HepG2 (cell line): ENCODE measurements at regions of chr2 and their contacts with region 1.

Region 1: DNA sequence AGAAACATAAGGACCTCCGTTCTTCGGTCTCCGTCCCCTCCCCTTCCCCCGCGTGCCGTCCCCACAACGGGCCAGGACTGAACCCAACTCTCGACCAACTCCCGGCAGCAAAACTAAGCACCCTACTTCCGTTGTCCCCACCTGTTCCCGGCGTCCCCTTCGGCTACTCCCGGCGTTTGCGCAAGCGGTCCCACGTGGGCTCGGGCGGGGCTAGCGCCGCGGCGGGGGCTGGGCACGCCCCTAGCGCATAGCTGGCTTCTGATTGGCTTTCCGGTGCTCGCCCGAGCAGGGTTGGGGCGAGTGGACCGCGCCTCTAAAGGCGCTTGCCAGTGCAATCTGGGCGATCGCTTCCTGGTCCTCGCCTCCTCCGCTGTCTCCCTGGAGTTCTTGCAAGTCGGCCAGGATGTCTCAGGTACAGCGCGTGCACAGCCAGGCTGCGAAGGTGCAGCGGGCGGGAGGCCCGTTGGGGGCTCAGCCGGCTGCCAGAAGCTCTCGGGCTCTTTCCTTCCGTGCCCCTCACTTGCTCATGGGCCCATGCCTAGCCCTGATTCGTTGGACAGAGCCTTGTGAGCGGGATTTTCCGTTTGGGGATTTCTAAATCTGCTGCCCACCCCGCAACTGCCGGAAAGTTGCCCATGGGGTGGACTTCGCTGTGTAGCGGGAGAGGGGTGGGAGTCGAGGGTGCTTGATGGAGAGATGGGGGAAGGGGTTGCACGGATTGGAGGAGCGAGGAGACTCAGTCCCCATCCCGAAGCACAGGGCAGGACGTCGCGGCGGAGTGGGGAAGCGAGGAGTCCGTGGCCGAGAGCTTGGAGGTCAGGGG is at the starts of genes C2orf76 and DBI:
- DNase-seq: peak; percentile 95
- ATAC-seq: peak; percentile 95
- H3K4me3 ChIP-seq: peak within 1 kb of the TSS; percentile 86 to 95 (median 88)
- H3K27ac ChIP-seq: peak within 1 kb of the TSS; percentile 84
- H3K4me1 ChIP-seq: peaks cover 42% of the 10 kb centered on the region
- H3K27me3 ChIP-seq: no peaks in the 10 kb centered on the region; a peak in 1 of 5 replicates
- CTCF ChIP-seq: 0 out of 2 replicates have a peak, but pooled peaks have one; percentile 7
- EP300 ChIP-seq: peak; percentile 78 to 90
- POLR2A ChIP-seq: peak; percentile 87 to 98
- RAD21 ChIP-seq: peak; percentile 18
- total RNA-seq, gene C2orf76: 8.5 TPM in 2 replicates
- total RNA-seq, gene DBI: 659 and 853 TPM in 2 replicates

Region 2: GRCh38 chr2:119223521-119224390 is 143.1 kb before region 1 on chr2 and contains the start of gene STEAP3:
- CTCF ChIA-PET with region 1: no interaction called
- POLR2A ChIA-PET with region 1: no interaction called
- in situ Hi-C with region 1: no loop called
- intact Hi-C with region 1: loop called (anchors 2 kb)
- DNase-seq: peak; percentile 74
- ATAC-seq: peak; percentile 93
- H3K4me3 ChIP-seq: peak within 1 kb of the TSS; percentile 71 to 87 (median 78)
- H3K27ac ChIP-seq: no peak within 1 kb of the TSS
- H3K4me1 ChIP-seq: peaks cover 54% of the 10 kb centered on the region
- H3K27me3 ChIP-seq: 0 out of 5 replicates have a peak, but pooled peaks cover 0 to 4% of the 10 kb centered on the region in 2 experiments
- CTCF ChIP-seq: 0 out of 2 replicates have a peak, but pooled peaks have one; percentile 10
- EP300 ChIP-seq: peak in 1 of 2 experiments; percentile 8; a peak in 1 of 4 replicates
- POLR2A ChIP-seq: peak; percentile 79 to 83
- RAD21 ChIP-seq: peak; percentile 26
- total RNA-seq, gene STEAP3: 12.8 and 21.1 TPM in 2 replicates

Region 3: GRCh38 chr2:119290859-119291587 is 75.8 kb before region 1 on chr2:
- CTCF ChIA-PET with region 1: no interaction called
- POLR2A ChIA-PET with region 1: interaction called, 4 read pairs
- in situ Hi-C with region 1: no loop called
- intact Hi-C with region 1: loop called (anchors 5 kb)
- DNase-seq: peak; percentile 75
- ATAC-seq: peak; percentile 97
- H3K4me3 ChIP-seq: peak overlapping the region in 1 of 3 experiments; percentile 2; a peak in 1 of 6 replicates
- H3K27ac ChIP-seq: no peak overlapping the region
- H3K4me1 ChIP-seq: peaks cover 27% of the 10 kb centered on the region
- H3K27me3 ChIP-seq: no peaks in the 10 kb centered on the region; a peak in 2 of 5 replicates
- CTCF ChIP-seq: peak; percentile 99
- EP300 ChIP-seq: no peak
- POLR2A ChIP-seq: no peak
- RAD21 ChIP-seq: peak; percentile 84

Region 4: GRCh38 chr2:119352357-119352756 is 14.5 kb before region 1 on chr2:
- CTCF ChIA-PET with region 1: no interaction called
- POLR2A ChIA-PET with region 1: interaction called, 26 read pairs
- in situ Hi-C with region 1: no loop called
- intact Hi-C with region 1: no loop called
- DNase-seq: no peak
- ATAC-seq: no peak
- H3K4me3 ChIP-seq: no peak overlapping the region
- H3K27ac ChIP-seq: no peak overlapping the region
- H3K4me1 ChIP-seq: no peaks in the 10 kb centered on the region
- H3K27me3 ChIP-seq: no peaks in the 10 kb centered on the region
- CTCF ChIP-seq: no peak
- EP300 ChIP-seq: no peak
- POLR2A ChIP-seq: no peak
- RAD21 ChIP-seq: no peak

Region 5: GRCh38 chr2:119377294-119377999 is 10.6 kb after region 1 on chr2:
- CTCF ChIA-PET with region 1: no interaction called
- POLR2A ChIA-PET with region 1: interaction called, 11 read pairs
- in situ Hi-C with region 1: no loop called
- intact Hi-C with region 1: no loop called
- DNase-seq: no peak
- ATAC-seq: peak; percentile 43
- H3K4me3 ChIP-seq: no peak overlapping the region
- H3K27ac ChIP-seq: no peak overlapping the region
- H3K4me1 ChIP-seq: peaks cover 35% of the 10 kb centered on the region
- H3K27me3 ChIP-seq: no peaks in the 10 kb centered on the region
- CTCF ChIP-seq: no peak
- EP300 ChIP-seq: no peak
- POLR2A ChIP-seq: no peak
- RAD21 ChIP-seq: no peak

Region 6: DNA sequence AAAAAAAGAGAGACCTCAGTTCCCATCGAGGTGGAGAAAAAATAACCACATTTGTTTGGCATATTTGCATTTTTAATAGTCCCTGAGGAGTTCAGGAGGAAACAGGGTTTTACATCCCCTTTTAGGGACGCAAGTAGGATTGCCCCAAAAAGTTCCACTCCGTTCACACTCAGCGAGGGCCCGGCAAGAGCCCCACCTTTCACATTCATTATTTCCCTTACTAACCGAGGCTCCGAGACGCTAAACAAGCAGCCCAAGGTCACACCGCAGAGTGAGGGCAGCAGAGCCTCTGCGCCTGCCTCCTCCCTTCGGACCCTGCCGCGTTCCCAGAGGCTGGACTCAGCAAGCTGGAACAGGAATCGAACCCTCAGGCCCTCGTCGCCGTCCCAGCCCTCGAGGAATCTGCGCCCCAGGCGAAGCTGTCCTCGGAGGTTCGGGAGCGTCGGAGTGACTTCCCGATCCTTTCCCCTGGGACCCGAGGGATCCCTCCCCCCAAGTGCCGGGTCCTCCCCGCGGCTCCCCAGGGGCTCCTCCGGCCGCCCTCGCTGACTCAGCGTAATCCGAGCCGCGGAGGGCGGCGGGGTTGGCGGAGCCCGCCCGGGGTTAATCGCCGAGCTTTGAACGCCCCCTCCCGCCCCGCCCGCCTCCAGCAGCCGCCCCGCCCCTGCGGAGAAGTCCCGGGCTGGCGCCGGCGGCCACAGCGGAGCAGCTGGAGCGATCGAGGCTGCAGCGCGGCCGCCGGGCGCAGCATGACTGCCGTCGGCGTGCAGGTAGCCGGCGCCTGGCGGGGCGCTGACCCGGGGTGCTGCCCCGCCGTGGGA is 64.5 kb after region 1 on chr2 and contains the start of gene TMEM37:
- CTCF ChIA-PET with region 1: no interaction called
- POLR2A ChIA-PET with region 1: interaction called, 14 read pairs
- in situ Hi-C with region 1: no loop called
- intact Hi-C with region 1: loop called (anchors 5 kb)
- DNase-seq: peak; percentile 79
- ATAC-seq: peak; percentile 70
- H3K4me3 ChIP-seq: peak within 1 kb of the TSS; percentile 84 to 90 (median 86)
- H3K27ac ChIP-seq: peak within 1 kb of the TSS; percentile 88
- H3K4me1 ChIP-seq: peaks cover 88% of the 10 kb centered on the region
- H3K27me3 ChIP-seq: no peaks in the 10 kb centered on the region; a peak in 1 of 5 replicates
- CTCF ChIP-seq: 0 out of 2 replicates have a peak, but pooled peaks have one; percentile 2
- EP300 ChIP-seq: peak in 1 of 2 experiments; percentile 64; a peak in 2 of 4 replicates
- POLR2A ChIP-seq: peak in 1 of 2 experiments; percentile 79; a peak in 1 of 4 replicates
- RAD21 ChIP-seq: 0 out of 2 replicates have a peak, but pooled peaks have one; percentile 14
- total RNA-seq, gene TMEM37: 23.7 and 37.7 TPM in 2 replicates

Region 7: DNA sequence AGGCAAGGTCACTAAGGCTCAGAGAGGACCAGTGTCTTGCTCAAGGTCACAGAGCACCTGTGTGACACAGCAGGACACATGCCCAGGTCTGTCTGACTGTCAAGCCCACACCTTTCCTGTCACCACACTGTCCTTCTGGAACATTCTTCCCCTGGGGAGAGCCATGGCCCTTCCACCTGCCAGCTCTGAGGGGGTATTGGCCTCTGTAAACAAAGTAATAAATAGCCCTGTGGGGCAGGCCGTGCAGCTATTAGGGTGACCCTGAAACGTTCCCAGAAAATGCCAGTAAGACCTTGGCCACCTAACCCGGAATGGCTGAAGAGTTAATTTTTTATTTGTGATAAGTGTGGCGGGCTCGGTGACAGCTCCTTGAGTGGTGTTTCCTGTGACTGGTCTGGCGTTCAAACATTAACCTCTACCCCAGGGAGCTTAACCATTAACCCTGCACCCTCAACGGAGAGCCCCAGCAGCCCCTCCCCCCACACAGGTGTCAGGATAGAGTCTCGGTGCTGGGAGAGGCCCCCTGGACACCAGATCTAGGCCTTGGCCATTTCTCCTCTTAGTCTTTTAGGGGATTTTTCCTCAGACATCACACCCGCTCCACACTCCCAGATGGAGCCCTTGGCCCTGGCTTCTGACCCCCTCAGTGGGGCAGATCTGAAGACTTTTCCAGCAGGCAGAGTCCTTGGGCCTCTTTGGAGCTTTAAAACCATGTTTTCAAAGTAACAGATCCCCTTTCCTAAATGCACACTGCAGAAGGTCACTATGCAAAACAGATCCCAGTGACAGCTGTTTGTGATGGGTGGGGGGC is 120.8 kb after region 1 on chr2:
- CTCF ChIA-PET with region 1: no interaction called
- POLR2A ChIA-PET with region 1: interaction called, 11 read pairs
- in situ Hi-C with region 1: no loop called
- intact Hi-C with region 1: no loop called
- DNase-seq: peak; percentile 90
- ATAC-seq: peak; percentile 90
- H3K4me3 ChIP-seq: peak overlapping the region in 1 of 3 experiments; percentile 49; a peak in 2 of 6 replicates
- H3K27ac ChIP-seq: peak overlapping the region; percentile 54
- H3K4me1 ChIP-seq: peaks cover 87% of the 10 kb centered on the region
- H3K27me3 ChIP-seq: peaks cover 0 to 33% of the 10 kb centered on the region in 2 experiments; a peak in 3 of 5 replicates
- CTCF ChIP-seq: no peak
- EP300 ChIP-seq: peak in 1 of 2 experiments; percentile 63; a peak in 1 of 4 replicates
- POLR2A ChIP-seq: no peak
- RAD21 ChIP-seq: 0 out of 2 replicates have a peak, but pooled peaks have one; percentile 12